ENCODE measurements at regions of chr18 and their contacts with region 1.

Region 1: DNA sequence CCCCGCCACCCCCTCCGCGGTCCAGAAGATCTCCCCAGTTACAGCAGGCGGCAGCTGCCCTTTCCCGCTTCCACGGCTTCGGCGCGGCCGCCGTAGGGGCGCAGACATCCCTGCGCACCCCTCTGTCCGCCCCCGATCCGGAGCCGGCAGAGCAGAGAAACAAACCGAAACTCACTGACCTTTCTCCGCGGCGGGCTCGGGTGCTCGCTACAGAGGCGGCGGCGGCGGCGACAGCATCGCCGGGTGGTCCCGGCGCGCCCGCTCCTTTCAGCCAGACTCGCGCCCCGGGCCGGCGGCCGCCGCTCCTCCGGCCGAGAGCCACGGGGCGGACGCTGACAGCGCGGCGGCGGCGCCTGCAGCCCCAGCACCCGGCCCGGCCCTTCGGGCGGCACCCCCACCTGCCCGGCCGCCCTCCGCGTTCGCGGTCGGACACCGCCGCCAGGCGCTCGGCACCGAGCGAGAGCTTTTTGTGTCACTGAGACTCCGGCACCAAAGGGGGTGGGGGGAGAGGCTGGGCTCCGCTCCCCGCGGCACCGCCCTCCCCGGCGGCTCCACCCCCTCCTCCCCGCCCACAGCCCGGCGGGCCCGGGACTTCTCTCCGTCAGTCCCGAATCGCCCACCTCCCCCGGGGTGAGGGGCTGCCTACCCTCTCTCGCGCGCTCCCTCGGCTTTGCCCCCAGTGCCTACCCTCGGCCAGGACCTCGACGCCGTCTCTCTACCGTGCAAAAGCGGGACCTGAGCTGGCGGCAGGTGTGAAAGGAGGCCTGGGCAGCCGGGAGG is 1.4 kb upstream of the RNF152 start:
- DNase-seq: no peak
- H3K4me3 ChIP-seq: peak overlapping the region; percentile 83
- H3K27ac ChIP-seq: peak overlapping the region; percentile 31
- H3K27me3 ChIP-seq: no peaks in the 10 kb centered on the region
- CTCF ChIP-seq: peak; percentile 24

Region 2: DNA sequence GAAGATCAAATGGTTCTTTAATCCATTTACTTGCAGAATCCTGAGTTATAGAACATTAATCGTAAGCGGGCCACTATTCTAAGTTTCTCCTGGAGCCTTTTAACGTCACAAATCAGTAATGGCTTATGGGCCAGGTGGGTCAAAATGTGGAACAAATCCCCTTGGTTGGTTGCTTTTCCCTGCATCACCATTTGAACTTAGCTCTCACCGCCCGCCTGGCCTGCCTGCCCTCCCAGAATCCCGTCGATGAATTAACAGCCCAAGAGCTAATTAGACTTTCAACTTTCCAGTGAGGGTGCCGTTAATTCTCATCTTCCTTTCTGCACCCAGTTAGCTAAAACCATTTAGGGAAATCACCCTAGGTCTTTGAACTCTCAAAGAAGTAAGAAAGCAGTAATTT is 206.8 kb before region 1 on chr18:
- CTCF ChIA-PET with region 1: interaction called, 16 read pairs
- POLR2A ChIA-PET with region 1: no interaction called
- DNase-seq: no peak
- H3K4me3 ChIP-seq: no peak overlapping the region
- H3K27ac ChIP-seq: no peak overlapping the region
- H3K27me3 ChIP-seq: no peaks in the 10 kb centered on the region
- CTCF ChIP-seq: no peak

Measured in AG04450 (cell line).